B cell (primary cell): ENCODE measurements at regions of chr22 and their contacts with region 1.

Region 1: GRCh38 chr22:41697126-41697775 is 2.1 kb upstream of the MEI1 start:
- DNase-seq: peak; percentile 91
- ATAC-seq: peak; percentile 87
- H3K4me3 ChIP-seq: peak overlapping the region in 1 of 5 experiments; percentile 10
- H3K4me3 Mint-ChIP-seq: peak overlapping the region; percentile 78
- H3K27ac ChIP-seq: peak overlapping the region in 1 of 2 donors; percentile 18
- H3K27ac Mint-ChIP-seq: peak overlapping the region; percentile 88
- H3K4me1 ChIP-seq: peaks cover 8 to 18% of the 10 kb centered on the region in 2 donors
- H3K4me1 Mint-ChIP-seq: peaks cover 9% of the 10 kb centered on the region
- H3K27me3 ChIP-seq: no peaks in the 10 kb centered on the region
- H3K27me3 Mint-ChIP-seq: no peaks in the 10 kb centered on the region
- CTCF ChIP-seq: peak; percentile 96

Region 2: DNA sequence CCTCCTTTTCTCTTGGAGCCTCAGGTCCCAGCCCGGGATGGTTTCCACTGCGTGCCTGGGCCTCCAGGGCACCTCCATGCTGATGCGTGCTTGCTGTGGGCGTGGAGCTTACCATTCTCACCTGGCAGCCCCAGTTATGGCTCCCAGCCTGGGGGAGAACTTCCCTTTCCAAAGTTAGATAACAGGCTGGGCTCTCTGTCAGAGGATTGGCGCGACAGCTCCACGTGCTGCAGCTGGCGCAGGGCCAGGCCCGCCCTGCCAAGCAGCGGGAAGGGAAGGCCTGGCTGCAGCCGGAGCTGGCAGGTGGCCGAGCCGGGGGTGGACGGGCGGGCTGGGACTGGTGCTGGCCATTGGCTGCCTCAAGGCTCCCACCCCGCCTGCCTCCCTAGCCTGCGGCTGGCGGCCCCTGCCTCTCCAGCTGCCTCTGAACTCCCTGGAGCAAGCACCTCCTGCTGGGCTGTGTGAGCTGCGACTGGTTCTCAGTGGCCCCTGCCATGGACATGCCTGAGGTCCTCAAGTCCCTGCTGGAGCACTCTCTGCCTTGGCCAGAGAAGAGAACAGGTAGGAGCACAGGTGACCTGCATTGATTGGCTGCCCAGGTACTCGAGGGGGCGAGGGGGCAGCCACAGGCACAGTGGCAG is 330.1 kb before region 1 on chr22:
- CTCF ChIA-PET with region 1: no interaction called
- POLR2A ChIA-PET with region 1: no interaction called
- intact Hi-C with region 1: no loop called
- DNase-seq: no peak
- ATAC-seq: no peak
- H3K4me3 ChIP-seq: no peak overlapping the region
- H3K4me3 Mint-ChIP-seq: no peak overlapping the region
- H3K27ac ChIP-seq: no peak overlapping the region
- H3K27ac Mint-ChIP-seq: no peak overlapping the region
- H3K4me1 ChIP-seq: no peaks in the 10 kb centered on the region
- H3K4me1 Mint-ChIP-seq: no peaks in the 10 kb centered on the region
- H3K27me3 ChIP-seq: peaks cover 0 to 11% (median 0%) of the 10 kb centered on the region in 4 experiments
- H3K27me3 Mint-ChIP-seq: peaks cover 4% of the 10 kb centered on the region
- CTCF ChIP-seq: no peak

Region 3: GRCh38 chr22:41613456-41613855 is 83.8 kb before region 1 on chr22:
- CTCF ChIA-PET with region 1: no interaction called
- POLR2A ChIA-PET with region 1: no interaction called
- intact Hi-C with region 1: no loop called
- DNase-seq: no peak
- ATAC-seq: no peak
- H3K4me3 ChIP-seq: no peak overlapping the region
- H3K4me3 Mint-ChIP-seq: no peak overlapping the region
- H3K27ac ChIP-seq: no peak overlapping the region
- H3K27ac Mint-ChIP-seq: no peak overlapping the region
- H3K4me1 ChIP-seq: no peaks in the 10 kb centered on the region
- H3K4me1 Mint-ChIP-seq: peaks cover 5% of the 10 kb centered on the region
- H3K27me3 ChIP-seq: no peaks in the 10 kb centered on the region
- H3K27me3 Mint-ChIP-seq: no peaks in the 10 kb centered on the region
- CTCF ChIP-seq: no peak

Region 4: GRCh38 chr22:41642331-41643110 is 54.7 kb before region 1 on chr22:
- CTCF ChIA-PET with region 1: no interaction called
- POLR2A ChIA-PET with region 1: no interaction called
- intact Hi-C with region 1: no loop called
- DNase-seq: no peak
- ATAC-seq: no peak
- H3K4me3 ChIP-seq: no peak overlapping the region
- H3K4me3 Mint-ChIP-seq: no peak overlapping the region
- H3K27ac ChIP-seq: no peak overlapping the region
- H3K27ac Mint-ChIP-seq: no peak overlapping the region
- H3K4me1 ChIP-seq: no peaks in the 10 kb centered on the region
- H3K4me1 Mint-ChIP-seq: no peaks in the 10 kb centered on the region
- H3K27me3 ChIP-seq: no peaks in the 10 kb centered on the region
- H3K27me3 Mint-ChIP-seq: no peaks in the 10 kb centered on the region
- CTCF ChIP-seq: no peak

Region 5: DNA sequence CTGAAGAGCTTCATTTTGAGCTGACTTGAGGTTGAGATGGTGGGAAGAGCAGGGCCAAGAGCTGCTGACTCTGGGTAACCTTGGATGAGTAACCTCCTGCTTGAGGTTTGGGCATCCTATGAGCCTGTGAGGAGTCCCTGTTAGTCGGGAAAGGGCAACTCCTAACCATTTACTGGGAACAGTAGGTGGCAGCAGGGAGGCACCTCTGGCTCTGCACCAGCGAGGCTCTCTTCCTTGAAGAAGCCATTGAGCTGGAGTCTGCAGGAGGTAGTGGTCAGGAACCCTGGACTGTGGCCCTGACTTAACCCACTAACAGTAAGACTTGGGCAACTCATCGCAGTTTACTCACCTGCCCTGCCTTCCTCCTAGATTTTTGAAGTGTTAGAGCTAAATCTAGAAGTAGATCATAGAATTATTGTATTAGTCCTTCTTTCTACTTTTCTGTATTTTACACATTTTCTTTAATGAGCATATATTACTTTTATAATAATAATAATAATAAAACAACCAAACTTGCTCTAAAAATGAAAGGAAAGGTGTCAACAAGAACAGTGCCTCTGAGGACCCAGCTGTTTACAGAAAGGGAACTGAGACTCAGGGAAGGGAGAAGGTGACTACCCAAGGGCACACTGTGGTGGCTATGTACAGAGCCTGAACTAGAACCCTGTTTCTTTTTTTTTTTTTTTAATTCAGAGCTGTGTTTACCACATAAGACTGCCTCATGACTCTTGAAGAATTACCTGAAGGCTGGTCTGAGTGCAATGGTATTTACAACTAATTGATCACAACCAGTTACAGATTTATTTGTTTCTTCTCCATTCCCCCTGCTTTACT is 49.5 kb after region 1 on chr22:
- CTCF ChIA-PET with region 1: interaction called, 32 read pairs
- POLR2A ChIA-PET with region 1: interaction called, 3 read pairs
- intact Hi-C with region 1: no loop called
- DNase-seq: peak; percentile 73
- ATAC-seq: peak; percentile 96
- H3K4me3 ChIP-seq: peak overlapping the region in 1 of 5 experiments; percentile 26
- H3K4me3 Mint-ChIP-seq: peak overlapping the region; percentile 63
- H3K27ac ChIP-seq: peak overlapping the region; percentile 50 to 62
- H3K27ac Mint-ChIP-seq: peak overlapping the region; percentile 80
- H3K4me1 ChIP-seq: peaks cover 30 to 32% of the 10 kb centered on the region in 2 donors
- H3K4me1 Mint-ChIP-seq: peaks cover 32% of the 10 kb centered on the region
- H3K27me3 ChIP-seq: no peaks in the 10 kb centered on the region
- H3K27me3 Mint-ChIP-seq: no peaks in the 10 kb centered on the region
- CTCF ChIP-seq: peak; percentile 40

Region 6: GRCh38 chr22:41786418-41786817 is 89.2 kb after region 1 on chr22:
- CTCF ChIA-PET with region 1: interaction called, 45 read pairs
- POLR2A ChIA-PET with region 1: interaction called, 4 read pairs
- intact Hi-C with region 1: loop called (anchors 1 kb)
- DNase-seq: no peak
- ATAC-seq: no peak
- H3K4me3 ChIP-seq: no peak overlapping the region
- H3K4me3 Mint-ChIP-seq: no peak overlapping the region
- H3K27ac ChIP-seq: no peak overlapping the region
- H3K27ac Mint-ChIP-seq: no peak overlapping the region
- H3K4me1 ChIP-seq: peaks cover 16 to 18% of the 10 kb centered on the region in 2 donors
- H3K4me1 Mint-ChIP-seq: peaks cover 23% of the 10 kb centered on the region
- H3K27me3 ChIP-seq: no peaks in the 10 kb centered on the region
- H3K27me3 Mint-ChIP-seq: no peaks in the 10 kb centered on the region
- CTCF ChIP-seq: no peak

Region 7: DNA sequence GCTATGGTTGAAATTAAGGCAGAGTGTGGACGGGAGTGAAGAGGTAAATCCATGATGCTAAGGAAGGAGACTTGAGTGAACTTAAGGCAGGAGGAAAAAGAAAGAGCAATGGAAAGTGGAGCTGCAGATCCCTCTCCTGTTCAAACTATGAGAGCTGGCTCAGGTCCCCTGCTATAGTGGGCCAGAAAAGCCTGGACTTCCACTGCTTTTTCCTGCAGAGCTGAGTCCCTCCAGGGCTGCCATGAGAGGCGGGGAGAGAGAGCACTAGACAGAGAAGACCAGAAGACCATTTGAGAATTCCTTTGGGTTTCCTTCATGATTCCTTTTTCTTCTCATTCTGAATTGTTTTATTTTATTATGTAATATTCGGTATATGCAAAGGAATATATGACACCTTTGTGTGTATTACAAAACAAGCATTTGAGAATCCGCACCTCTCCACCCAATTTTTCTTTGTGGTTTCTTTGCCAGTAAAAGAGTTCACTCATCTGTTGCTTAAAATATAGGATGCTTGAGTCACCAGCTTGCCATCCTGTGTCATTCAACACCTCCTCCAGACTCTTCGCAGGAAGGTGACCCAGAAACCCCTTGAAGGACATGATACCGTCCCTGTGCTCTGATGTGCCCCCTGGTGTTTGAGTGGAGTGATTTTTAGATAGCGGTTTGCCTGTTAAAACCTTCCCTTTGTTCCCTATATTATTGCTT is 160.1 kb after region 1 on chr22:
- CTCF ChIA-PET with region 1: interaction called, 21 read pairs
- POLR2A ChIA-PET with region 1: no interaction called
- intact Hi-C with region 1: loop called (anchors 1 kb)
- DNase-seq: peak; percentile 75
- ATAC-seq: peak; percentile 25
- H3K4me3 ChIP-seq: no peak overlapping the region
- H3K4me3 Mint-ChIP-seq: peak overlapping the region; percentile 40
- H3K27ac ChIP-seq: peak overlapping the region; percentile 10 to 63
- H3K27ac Mint-ChIP-seq: peak overlapping the region; percentile 80
- H3K4me1 ChIP-seq: peaks cover 52 to 62% of the 10 kb centered on the region in 2 donors
- H3K4me1 Mint-ChIP-seq: peaks cover 67% of the 10 kb centered on the region
- H3K27me3 ChIP-seq: no peaks in the 10 kb centered on the region
- H3K27me3 Mint-ChIP-seq: no peaks in the 10 kb centered on the region
- CTCF ChIP-seq: peak; percentile 78

Region 8: DNA sequence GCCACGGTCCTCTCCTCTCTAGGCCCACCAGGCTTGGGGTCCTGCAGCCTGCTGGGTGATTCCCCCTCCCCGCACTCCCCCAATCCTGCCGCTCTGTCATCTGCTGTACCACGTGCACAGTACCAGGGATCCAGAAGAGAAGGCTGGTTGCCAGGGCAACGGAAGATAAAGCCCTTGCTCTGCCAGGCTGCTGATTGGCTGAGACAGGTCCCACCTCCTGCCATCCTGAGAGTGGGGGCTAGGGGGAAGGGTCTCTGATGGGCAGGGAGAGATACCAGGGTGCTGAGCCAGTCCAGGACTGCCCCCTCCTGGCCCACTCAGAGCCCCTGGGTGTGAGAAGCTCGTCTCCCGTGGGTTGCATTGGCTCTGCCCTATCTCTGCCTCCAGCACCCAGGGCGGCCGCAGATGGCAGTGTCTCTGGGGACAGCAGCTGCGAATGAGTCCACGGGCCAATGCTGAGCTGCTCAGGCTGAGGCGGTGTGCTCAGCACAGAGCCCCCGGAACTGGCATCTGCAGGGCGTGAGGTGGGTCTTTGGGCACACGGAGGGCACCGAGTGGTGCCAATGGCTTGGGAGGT is 254.7 kb after region 1 on chr22 and contains the start of gene SMIM45:
- CTCF ChIA-PET with region 1: interaction called, 53 read pairs
- POLR2A ChIA-PET with region 1: interaction called, 4 read pairs
- intact Hi-C with region 1: loop called (anchors 1 kb)
- DNase-seq: peak; percentile 79
- ATAC-seq: peak; percentile 92
- H3K4me3 ChIP-seq: no peak within 1 kb of the TSS
- H3K4me3 Mint-ChIP-seq: peak within 1 kb of the TSS; percentile 32
- H3K27ac ChIP-seq: no peak within 1 kb of the TSS
- H3K27ac Mint-ChIP-seq: peak within 1 kb of the TSS; percentile 51
- H3K4me1 ChIP-seq: peaks cover 18 to 48% of the 10 kb centered on the region in 2 donors
- H3K4me1 Mint-ChIP-seq: peaks cover 48% of the 10 kb centered on the region
- H3K27me3 ChIP-seq: no peaks in the 10 kb centered on the region
- H3K27me3 Mint-ChIP-seq: no peaks in the 10 kb centered on the region
- CTCF ChIP-seq: peak; percentile 30